A673 (cell line): ENCODE measurements at regions of chr1 and their contacts with region 1.

Region 1: GRCh38 chr1:176767714-176768136 is 304.8 kb downstream of the PAPPA2 start:
- DNase-seq: no peak
- H3K4me3 ChIP-seq: no peak overlapping the region
- H3K27ac ChIP-seq: no peak overlapping the region
- H3K4me1 ChIP-seq: no peaks in the 10 kb centered on the region
- H3K27me3 ChIP-seq: peaks cover 6% of the 10 kb centered on the region
- CTCF ChIP-seq: no peak

Region 2: DNA sequence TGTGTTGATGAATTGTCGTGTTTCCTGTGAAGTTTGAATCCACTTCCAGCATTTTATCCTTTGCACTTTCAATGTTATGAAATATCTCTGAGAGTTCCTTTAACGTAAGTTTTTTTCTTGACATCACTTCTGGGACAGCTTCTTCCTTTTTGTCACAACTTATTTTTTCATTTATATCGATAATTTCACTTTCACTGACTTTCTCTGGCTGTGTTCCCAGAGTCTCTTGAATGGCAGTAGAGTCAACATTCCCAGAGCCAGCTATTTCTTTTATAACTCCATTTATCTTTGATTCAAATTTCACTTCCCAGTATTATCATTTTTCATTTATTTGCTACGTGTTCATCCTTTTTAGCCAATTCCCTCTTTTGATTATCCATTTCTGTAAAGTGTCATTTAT is 48.3 kb before region 1 on chr1:
- CTCF ChIA-PET with region 1: no interaction called
- POLR2A ChIA-PET with region 1: no interaction called
- intact Hi-C with region 1: loop called (anchors 2 kb)
- DNase-seq: no peak
- H3K4me3 ChIP-seq: no peak overlapping the region
- H3K27ac ChIP-seq: no peak overlapping the region
- H3K4me1 ChIP-seq: no peaks in the 10 kb centered on the region
- H3K27me3 ChIP-seq: no peaks in the 10 kb centered on the region
- CTCF ChIP-seq: no peak